K562 (cell line): ENCODE measurements at regions of chr16 and their contacts with region 1.

Region 1: GRCh38 chr16:88811769-88812512 is at the start of gene APRT:
- DNase-seq: peak; percentile 92 to 98 (median 95)
- ATAC-seq: peak; percentile 84
- H3K4me3 ChIP-seq: peak within 1 kb of the TSS; percentile 64
- H3K27ac ChIP-seq: peak within 1 kb of the TSS; percentile 94
- H3K4me1 ChIP-seq: peaks cover 14 to 82% of the 10 kb centered on the region in 2 experiments
- H3K27me3 ChIP-seq: no peaks in the 10 kb centered on the region
- CTCF ChIP-seq: peak; percentile 67 to 89 (median 84)
- EP300 ChIP-seq: peak; percentile 9; the same call in 1 of the 2 replicates
- POLR2A ChIP-seq: peak; percentile 80
- RAD21 ChIP-seq: peak; percentile 93 to 94
- polyA plus RNA-seq, gene APRT: 41.7 to 116 TPM

Region 2: DNA sequence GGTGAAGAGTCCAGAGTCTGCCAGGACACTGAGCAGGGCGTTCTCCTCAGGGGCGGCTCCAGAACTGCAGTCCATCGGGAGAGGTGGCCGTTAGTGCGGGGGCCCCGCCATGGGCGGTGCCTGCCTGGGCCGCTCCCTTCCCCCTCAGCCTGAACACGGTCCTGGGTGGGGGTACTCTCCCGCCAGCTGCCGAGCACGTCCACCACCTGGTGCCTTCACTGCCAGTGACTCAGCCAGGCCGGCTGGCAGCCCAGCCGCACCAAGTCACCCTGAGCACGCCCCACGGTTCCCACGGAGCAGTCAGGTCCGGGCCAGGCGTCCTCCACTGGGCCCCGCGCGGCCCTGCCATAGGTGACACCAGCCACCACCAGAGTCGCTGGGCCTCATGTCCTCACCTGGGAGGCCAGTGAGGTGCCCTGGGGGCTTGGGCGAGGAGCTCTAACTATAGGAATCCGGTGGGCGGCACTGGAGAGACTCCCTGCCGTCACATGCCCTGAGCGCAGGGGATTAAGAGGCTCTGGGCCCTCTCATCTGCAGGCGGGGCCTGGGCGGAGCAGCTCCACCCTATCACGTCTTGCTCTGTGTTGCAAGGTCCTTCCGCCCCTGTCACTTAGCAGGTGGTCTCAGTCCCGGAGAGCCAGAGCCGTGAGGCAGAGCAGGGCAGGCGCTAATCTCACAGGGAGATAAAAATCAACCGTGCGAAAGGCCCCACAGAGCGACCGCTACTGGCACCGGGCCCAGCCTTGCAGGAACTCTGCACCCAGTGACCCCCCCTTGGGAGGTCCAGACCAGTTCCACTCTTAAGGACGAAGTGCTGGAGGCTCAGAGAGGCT is 41.3 kb before region 1 on chr16:
- CTCF ChIA-PET with region 1: no interaction called
- POLR2A ChIA-PET with region 1: interaction called, 15 read pairs
- in situ Hi-C with region 1: no loop called
- intact Hi-C with region 1: no loop called
- DNase-seq: peak; percentile 67 to 98 (median 80)
- ATAC-seq: peak; percentile 80
- H3K4me3 ChIP-seq: peak overlapping the region; percentile 38
- H3K27ac ChIP-seq: peak overlapping the region; percentile 91
- H3K4me1 ChIP-seq: peaks cover 75 to 100% of the 10 kb centered on the region in 2 experiments
- H3K27me3 ChIP-seq: no peaks in the 10 kb centered on the region
- CTCF ChIP-seq: peak in 2 of 3 experiments; percentile 14 to 26; a peak in 1 of 6 replicates
- EP300 ChIP-seq: peak; percentile 86
- POLR2A ChIP-seq: peak; percentile 74; the same call in 1 of the 2 replicates
- RAD21 ChIP-seq: peak; percentile 21 to 37

Region 3: GRCh38 chr16:88791755-88792550 is 20.0 kb before region 1 on chr16:
- CTCF ChIA-PET with region 1: no interaction called
- POLR2A ChIA-PET with region 1: interaction called, 18 read pairs
- in situ Hi-C with region 1: no loop called
- intact Hi-C with region 1: no loop called
- DNase-seq: no peak
- ATAC-seq: peak; percentile 5; the same call in 1 of the 3 replicates
- H3K4me3 ChIP-seq: no peak overlapping the region
- H3K27ac ChIP-seq: no peak overlapping the region
- H3K4me1 ChIP-seq: peaks cover 14 to 44% of the 10 kb centered on the region in 2 experiments
- H3K27me3 ChIP-seq: no peaks in the 10 kb centered on the region
- CTCF ChIP-seq: no peak
- EP300 ChIP-seq: no peak
- POLR2A ChIP-seq: no peak
- RAD21 ChIP-seq: no peak

Region 4: GRCh38 chr16:88882358-88883030 is 70.6 kb after region 1 on chr16:
- CTCF ChIA-PET with region 1: no interaction called
- POLR2A ChIA-PET with region 1: no interaction called
- in situ Hi-C with region 1: no loop called
- intact Hi-C with region 1: no loop called
- DNase-seq: peak; percentile 61 to 85 (median 69)
- ATAC-seq: peak; percentile 84
- H3K4me3 ChIP-seq: no peak overlapping the region
- H3K27ac ChIP-seq: no peak overlapping the region; the same call in 2 of the 3 replicates
- H3K4me1 ChIP-seq: peaks cover 0 to 83% of the 10 kb centered on the region in 2 experiments; a peak in 2 of 5 replicates
- H3K27me3 ChIP-seq: no peaks in the 10 kb centered on the region
- CTCF ChIP-seq: no peak
- EP300 ChIP-seq: no peak
- POLR2A ChIP-seq: peak; percentile 63; the same call in 1 of the 2 replicates
- RAD21 ChIP-seq: no peak

Region 5: GRCh38 chr16:88977018-88977811 is 165.3 kb after region 1 on chr16 and contains the start of gene CBFA2T3:
- CTCF ChIA-PET with region 1: interaction called, 3 read pairs
- POLR2A ChIA-PET with region 1: no interaction called
- in situ Hi-C with region 1: no loop called
- intact Hi-C with region 1: loop called (anchors 5 kb)
- DNase-seq: peak; percentile 79 to 96 (median 88)
- ATAC-seq: peak; percentile 68
- H3K4me3 ChIP-seq: peak within 1 kb of the TSS; percentile 85
- H3K27ac ChIP-seq: peak within 1 kb of the TSS; percentile 98
- H3K4me1 ChIP-seq: peaks cover 49 to 90% of the 10 kb centered on the region in 2 experiments
- H3K27me3 ChIP-seq: no peaks in the 10 kb centered on the region
- CTCF ChIP-seq: no peak
- EP300 ChIP-seq: peak; percentile 80
- POLR2A ChIP-seq: peak; percentile 44
- RAD21 ChIP-seq: peak in 1 of 2 experiments; percentile 7; a peak in 2 of 4 replicates
- polyA plus RNA-seq, gene CBFA2T3: 2.3 to 2.7 TPM

Region 6: DNA sequence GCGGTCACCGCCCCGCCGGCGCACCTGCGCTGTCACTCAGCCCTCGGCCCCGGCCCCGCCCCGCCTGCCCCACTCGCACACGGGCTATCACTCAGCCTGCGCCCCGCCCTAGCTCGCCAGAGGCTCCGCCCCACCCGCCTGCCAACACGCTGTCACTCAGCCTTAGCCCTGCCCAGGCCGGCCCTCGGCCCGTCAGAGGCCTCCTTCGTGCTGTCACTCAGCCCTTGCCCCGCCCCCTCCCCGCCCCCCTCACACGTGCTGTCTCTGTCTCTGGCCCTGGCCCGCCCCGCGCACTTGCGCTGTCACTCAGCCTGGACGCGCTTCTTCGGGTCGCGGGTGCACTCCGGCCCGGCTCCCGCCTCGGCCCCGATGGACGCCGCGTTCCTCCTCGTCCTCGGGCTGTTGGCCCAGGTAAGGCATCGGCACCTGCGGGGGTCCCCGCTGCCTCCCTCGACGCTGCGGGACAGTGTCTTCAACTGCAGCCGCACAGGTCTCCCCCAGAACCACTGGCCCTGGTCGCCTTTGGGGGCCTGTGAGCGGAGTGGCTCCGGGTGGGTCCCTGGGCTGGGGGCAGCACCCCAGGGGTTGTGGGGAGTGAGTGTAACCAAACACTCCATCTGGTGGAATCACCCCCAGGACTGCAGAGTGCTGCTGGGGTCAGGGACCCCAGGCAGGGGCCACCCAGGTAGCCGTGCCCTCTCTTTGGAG is 359.7 kb after region 1 on chr16 and contains the start of gene CDH15:
- CTCF ChIA-PET with region 1: interaction called, 16 read pairs
- POLR2A ChIA-PET with region 1: interaction called, 5 read pairs
- in situ Hi-C with region 1: loop called (anchors 5 kb)
- intact Hi-C with region 1: loop called (anchors 2 kb)
- DNase-seq: peak; percentile 98 to 99 (median 98)
- ATAC-seq: peak; percentile 92
- H3K4me3 ChIP-seq: peak within 1 kb of the TSS; percentile 12
- H3K27ac ChIP-seq: no peak within 1 kb of the TSS
- H3K4me1 ChIP-seq: peaks cover 17 to 96% of the 10 kb centered on the region in 2 experiments
- H3K27me3 ChIP-seq: peaks cover 0 to 18% of the 10 kb centered on the region in 2 experiments; a peak in 2 of 5 replicates
- CTCF ChIP-seq: 0 out of 6 replicates have a peak, but pooled peaks of 1 of the 3 experiments have one; percentile 1
- EP300 ChIP-seq: no peak
- POLR2A ChIP-seq: no peak
- RAD21 ChIP-seq: no peak
- polyA plus RNA-seq, gene CDH15: not detected

Region 7: GRCh38 chr16:89507834-89508590 is 696.1 kb after region 1 on chr16 and contains the start of gene SPG7:
- CTCF ChIA-PET with region 1: no interaction called
- POLR2A ChIA-PET with region 1: no interaction called
- in situ Hi-C with region 1: no loop called
- intact Hi-C with region 1: loop called (anchors 5 kb)
- DNase-seq: peak; percentile 93 to 96 (median 94)
- ATAC-seq: peak; percentile 83
- H3K4me3 ChIP-seq: peak within 1 kb of the TSS; percentile 77
- H3K27ac ChIP-seq: peak within 1 kb of the TSS; percentile 90
- H3K4me1 ChIP-seq: peaks cover 29 to 55% of the 10 kb centered on the region in 2 experiments; a peak in 4 of 5 replicates
- H3K27me3 ChIP-seq: no peaks in the 10 kb centered on the region; a peak in 1 of 5 replicates
- CTCF ChIP-seq: no peak
- EP300 ChIP-seq: no peak
- POLR2A ChIP-seq: peak; percentile 86
- RAD21 ChIP-seq: no peak
- polyA plus RNA-seq, gene SPG7: 5.8 to 7.0 TPM